ENCODE measurements at regions of chr22 and their contacts with region 1.

Region 1: DNA sequence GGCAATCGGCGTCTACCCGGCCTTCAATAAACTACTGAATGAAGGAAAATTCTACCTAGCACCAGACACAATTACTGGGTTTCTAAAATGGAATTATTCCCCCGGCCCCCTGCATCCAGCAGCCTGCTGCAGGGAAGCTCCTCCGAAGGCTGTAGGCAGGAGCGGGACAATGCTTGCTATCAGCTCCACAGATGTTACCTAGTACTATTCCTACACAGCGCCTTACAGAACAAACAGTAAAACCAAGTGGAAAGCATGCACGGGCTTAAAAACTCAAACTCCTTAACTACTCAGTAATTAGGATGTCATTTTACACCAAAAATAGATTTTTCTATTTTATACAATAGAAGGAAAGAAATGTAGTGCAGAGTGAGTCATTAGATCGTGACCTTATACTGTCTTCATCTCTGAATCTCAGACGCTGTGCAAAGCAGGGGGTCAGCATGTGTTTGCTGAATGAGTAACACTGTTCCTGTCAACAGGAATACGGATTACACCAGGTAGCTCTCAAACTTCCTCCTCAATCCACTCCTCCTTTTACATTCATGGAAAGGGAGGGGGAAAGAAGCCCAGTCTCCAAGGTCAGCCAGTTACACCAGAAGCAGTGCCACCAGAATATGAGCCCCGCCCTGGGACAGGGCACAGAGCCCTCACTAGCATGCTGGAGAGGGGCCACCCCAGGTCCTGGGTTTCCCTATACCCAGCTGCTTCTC is 74.9 kb downstream of the PACSIN2 start:
- DNase-seq: peak; percentile 95
- H3K4me3 ChIP-seq: peak overlapping the region in 1 of 3 experiments; percentile 13
- H3K27ac ChIP-seq: peak overlapping the region; percentile 91
- H3K4me1 ChIP-seq: peaks cover 38% of the 10 kb centered on the region
- H3K27me3 ChIP-seq: no peaks in the 10 kb centered on the region
- CTCF ChIP-seq: no peak
- POLR2A ChIP-seq: no peak

Region 2: GRCh38 chr22:42860968-42861367 is 79.1 kb before region 1 on chr22:
- CTCF ChIA-PET with region 1: no interaction called
- POLR2A ChIA-PET with region 1: no interaction called
- dilution Hi-C with region 1: no loop called
- intact Hi-C with region 1: no loop called
- DNase-seq: no peak
- H3K4me3 ChIP-seq: no peak overlapping the region
- H3K27ac ChIP-seq: no peak overlapping the region
- H3K4me1 ChIP-seq: peaks cover 1% of the 10 kb centered on the region
- H3K27me3 ChIP-seq: no peaks in the 10 kb centered on the region
- CTCF ChIP-seq: no peak
- POLR2A ChIP-seq: no peak

Region 3: DNA sequence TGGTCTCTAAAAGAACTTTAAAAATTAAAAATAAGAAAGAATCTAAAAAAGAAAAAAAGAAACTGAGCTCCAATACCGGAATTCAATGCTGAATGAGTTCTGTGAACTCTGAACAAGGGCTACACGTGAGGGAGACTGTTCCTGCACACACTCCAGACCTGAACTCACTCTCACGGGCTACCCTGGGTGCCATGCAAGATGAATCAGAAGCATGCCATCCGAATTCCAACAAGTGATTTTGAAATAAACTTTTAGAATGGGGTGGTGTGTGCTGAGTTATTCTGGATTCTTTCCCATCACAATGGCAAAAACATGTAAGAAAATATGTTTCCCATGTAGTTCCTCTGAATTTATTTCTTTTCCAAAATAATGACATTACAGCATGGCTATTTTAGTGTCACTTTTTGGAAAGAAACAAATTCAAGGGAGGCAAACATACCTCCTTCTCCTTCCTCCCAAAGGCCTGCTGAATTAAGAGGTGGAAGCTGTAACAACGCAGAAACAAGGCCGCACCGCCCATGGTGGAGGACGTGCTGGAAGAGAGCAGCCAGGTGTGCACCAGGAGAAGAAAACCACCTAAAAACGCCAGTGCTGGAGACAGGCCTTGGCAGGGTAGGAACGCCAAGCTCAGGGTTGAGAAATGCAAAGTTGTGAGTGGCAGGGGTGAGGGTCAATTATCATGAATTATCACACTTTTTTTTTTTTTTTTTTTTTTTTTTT is 19.8 kb before region 1 on chr22:
- CTCF ChIA-PET with region 1: interaction called, 6 read pairs
- POLR2A ChIA-PET with region 1: no interaction called
- dilution Hi-C with region 1: no loop called
- intact Hi-C with region 1: loop called (anchors 1 kb)
- DNase-seq: no peak
- H3K4me3 ChIP-seq: no peak overlapping the region
- H3K27ac ChIP-seq: no peak overlapping the region
- H3K4me1 ChIP-seq: peaks cover 14% of the 10 kb centered on the region
- H3K27me3 ChIP-seq: no peaks in the 10 kb centered on the region
- CTCF ChIP-seq: no peak
- POLR2A ChIP-seq: no peak

Region 4: GRCh38 chr22:42926104-42926503 is 14.0 kb before region 1 on chr22:
- CTCF ChIA-PET with region 1: interaction called, 6 read pairs
- POLR2A ChIA-PET with region 1: no interaction called
- dilution Hi-C with region 1: no loop called
- intact Hi-C with region 1: loop called (anchors 1 kb)
- DNase-seq: peak; percentile 91
- H3K4me3 ChIP-seq: no peak overlapping the region
- H3K27ac ChIP-seq: peak overlapping the region; percentile 87
- H3K4me1 ChIP-seq: peaks cover 32% of the 10 kb centered on the region
- H3K27me3 ChIP-seq: no peaks in the 10 kb centered on the region
- CTCF ChIP-seq: no peak
- POLR2A ChIP-seq: no peak

Region 5: DNA sequence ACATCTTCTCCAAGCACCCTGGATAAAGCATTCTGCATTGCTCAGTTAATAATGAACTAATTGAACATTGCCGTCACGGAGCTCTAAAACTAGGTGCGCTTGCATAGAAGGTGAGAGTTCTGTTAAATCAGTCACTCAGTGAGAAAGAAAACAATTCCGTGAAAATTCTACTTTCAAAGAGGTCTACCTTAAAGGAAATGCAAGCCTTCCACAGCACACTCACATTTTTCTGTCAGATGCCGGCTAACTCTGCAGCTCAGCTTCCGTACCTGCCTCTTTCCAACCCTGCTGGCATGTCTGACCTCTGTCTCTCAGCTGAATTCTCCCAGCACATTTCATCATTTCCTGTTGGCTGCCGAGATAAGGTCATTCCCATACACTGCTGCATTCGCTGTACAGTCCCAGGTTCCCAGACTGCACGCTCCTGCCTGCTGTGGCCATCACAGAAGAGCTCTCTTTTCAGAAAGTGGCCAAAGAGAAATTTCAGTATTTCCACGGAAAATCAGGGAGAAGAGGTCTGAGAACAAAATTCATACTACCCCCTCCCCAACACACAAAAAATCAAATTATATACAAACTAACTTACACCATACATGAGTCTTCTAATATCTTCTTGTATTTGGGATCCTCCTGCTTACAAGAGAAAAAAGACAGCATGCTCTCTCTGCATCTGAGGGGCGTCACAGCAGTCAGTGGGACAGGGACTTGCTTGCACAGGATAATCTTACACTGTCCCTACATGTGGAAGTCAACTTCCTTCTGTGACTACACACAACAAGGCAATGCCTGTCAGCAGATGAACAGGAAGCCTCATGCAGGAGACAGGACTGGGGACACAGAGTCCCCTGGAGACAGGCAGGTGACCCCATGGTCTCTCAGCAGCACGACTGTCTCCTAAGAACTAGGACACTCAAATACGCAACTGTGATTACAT is 19.7 kb after region 1 on chr22:
- CTCF ChIA-PET with region 1: interaction called, 6 read pairs
- POLR2A ChIA-PET with region 1: no interaction called
- dilution Hi-C with region 1: no loop called
- intact Hi-C with region 1: loop called (anchors 1 kb)
- DNase-seq: peak; percentile 98
- H3K4me3 ChIP-seq: peak overlapping the region in 1 of 3 experiments; percentile 8
- H3K27ac ChIP-seq: peak overlapping the region; percentile 87
- H3K4me1 ChIP-seq: peaks cover 35% of the 10 kb centered on the region
- H3K27me3 ChIP-seq: no peaks in the 10 kb centered on the region
- CTCF ChIP-seq: no peak
- POLR2A ChIP-seq: peak; percentile 68

Region 6: DNA sequence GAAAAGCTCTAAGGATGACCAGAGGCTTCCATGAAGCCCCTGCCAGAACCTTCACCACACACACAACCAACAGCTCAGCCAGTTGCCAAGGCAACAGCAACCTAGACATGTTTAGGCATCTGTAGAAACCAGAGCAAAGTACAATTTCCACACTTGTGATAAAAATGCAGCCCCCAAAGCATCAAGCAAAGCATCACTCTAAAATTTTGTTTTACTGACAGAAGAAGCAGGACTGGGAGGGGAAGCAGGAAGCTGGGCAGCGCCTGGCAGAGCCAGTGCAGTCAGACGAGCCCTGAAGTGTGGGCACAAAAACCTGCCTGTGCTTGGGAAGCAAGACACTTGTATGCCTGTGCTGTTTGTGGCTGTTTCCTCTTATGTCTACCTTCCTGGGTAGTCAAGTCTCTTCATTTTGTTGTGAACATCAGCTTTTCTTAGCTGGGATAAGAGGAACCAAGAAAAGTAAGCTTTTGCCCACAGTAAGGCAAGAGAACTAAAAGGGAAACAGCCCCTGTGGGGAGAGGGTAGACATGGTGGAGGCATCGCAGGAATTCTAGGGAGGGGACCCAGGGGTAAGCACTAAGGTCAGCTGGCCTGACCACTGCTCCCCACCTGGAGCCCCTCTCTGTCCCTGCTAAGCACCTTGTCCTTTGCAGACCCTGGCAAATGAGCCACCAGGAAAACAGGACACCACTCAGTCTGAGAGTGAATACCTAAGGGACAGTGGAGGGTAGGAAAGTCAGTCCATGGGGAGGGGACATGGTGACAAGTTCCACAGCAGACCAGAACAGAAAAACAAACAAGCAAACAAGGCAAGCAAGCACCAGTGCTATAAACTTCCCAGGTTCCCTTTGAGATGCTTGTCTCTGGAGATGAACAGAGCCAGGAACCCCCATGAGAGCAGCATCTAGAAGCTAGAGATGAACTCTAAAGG is 61.4 kb after region 1 on chr22:
- CTCF ChIA-PET with region 1: no interaction called
- POLR2A ChIA-PET with region 1: interaction called, 3 read pairs
- dilution Hi-C with region 1: no loop called
- intact Hi-C with region 1: loop called (anchors 5 kb)
- DNase-seq: peak; percentile 29
- H3K4me3 ChIP-seq: peak overlapping the region in 1 of 3 experiments; percentile 16
- H3K27ac ChIP-seq: peak overlapping the region; percentile 78
- H3K4me1 ChIP-seq: peaks cover 59% of the 10 kb centered on the region
- H3K27me3 ChIP-seq: no peaks in the 10 kb centered on the region
- CTCF ChIP-seq: no peak
- POLR2A ChIP-seq: no peak